ENCODE measurements at regions of chr10 and their contacts with region 1.

Region 1: DNA sequence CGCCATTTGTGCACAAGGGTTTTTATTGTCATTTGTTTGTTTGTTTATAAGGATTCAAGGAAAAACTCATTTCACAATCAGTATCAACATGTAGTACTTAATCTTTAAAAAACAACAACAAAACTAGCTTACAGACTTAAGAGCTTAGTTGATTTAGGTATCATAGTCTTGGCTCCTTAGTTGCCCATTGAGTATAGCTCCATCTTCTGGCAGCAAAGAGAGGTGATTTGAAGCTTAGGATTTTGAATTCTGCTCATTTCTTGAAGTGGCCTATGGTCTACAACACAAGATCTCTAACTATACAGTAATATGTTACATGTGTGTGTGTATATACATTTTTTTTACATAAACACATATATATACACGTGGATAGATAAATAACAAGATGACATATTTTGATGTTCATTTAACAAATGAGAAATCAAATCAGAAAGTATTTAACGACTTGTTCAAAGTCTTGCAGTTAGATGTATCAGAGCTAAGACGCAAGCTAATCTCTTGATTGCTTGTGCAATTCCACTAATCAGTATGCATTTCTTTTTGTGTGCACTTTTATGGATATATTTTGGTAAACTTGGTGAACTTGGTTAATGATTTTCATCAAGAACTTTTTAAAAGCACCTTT is 307.3 kb downstream of the CAMK1D start:
- DNase-seq: peak in 7 of 9 donors; percentile 25 to 73 (median 55)
- ATAC-seq: peak; percentile 86
- H3K4me3 ChIP-seq: no peak overlapping the region
- H3K4me3 Mint-ChIP-seq: peak overlapping the region in 1 of 10 donors; percentile 55
- H3K27ac ChIP-seq: no peak overlapping the region
- H3K27ac Mint-ChIP-seq: peak overlapping the region in 4 of 9 donors; percentile 29 to 68 (median 42)
- H3K4me1 ChIP-seq: no peaks in the 10 kb centered on the region
- H3K4me1 Mint-ChIP-seq: peaks cover 0 to 22% (median 4%) of the 10 kb centered on the region in 7 donors
- H3K27me3 ChIP-seq: no peaks in the 10 kb centered on the region
- H3K27me3 Mint-ChIP-seq: no peaks in the 10 kb centered on the region

Region 2: GRCh38 chr10:12214763-12215218 is 441.8 kb before region 1 on chr10:
- CTCF ChIA-PET with region 1: interaction called, 17 read pairs
- POLR2A ChIA-PET with region 1: no interaction called
- intact Hi-C with region 1: loop called (anchors 1 kb)
- DNase-seq: peak in 7 of 9 donors; percentile 27 to 62 (median 47)
- ATAC-seq: peak; percentile 69
- H3K4me3 ChIP-seq: no peak overlapping the region
- H3K4me3 Mint-ChIP-seq: peak overlapping the region; percentile 61 to 84 (median 72)
- H3K27ac ChIP-seq: peak overlapping the region; percentile 38
- H3K27ac Mint-ChIP-seq: peak overlapping the region; percentile 73 to 96 (median 87)
- H3K4me1 ChIP-seq: no peaks in the 10 kb centered on the region
- H3K4me1 Mint-ChIP-seq: peaks cover 5 to 37% (median 20%) of the 10 kb centered on the region in 7 donors
- H3K27me3 ChIP-seq: no peaks in the 10 kb centered on the region
- H3K27me3 Mint-ChIP-seq: no peaks in the 10 kb centered on the region

Region 3: GRCh38 chr10:12438919-12439692 is 217.5 kb before region 1 on chr10:
- CTCF ChIA-PET with region 1: no interaction called
- POLR2A ChIA-PET with region 1: no interaction called
- intact Hi-C with region 1: no loop called
- DNase-seq: no peak
- ATAC-seq: no peak
- H3K4me3 ChIP-seq: no peak overlapping the region
- H3K4me3 Mint-ChIP-seq: no peak overlapping the region
- H3K27ac ChIP-seq: no peak overlapping the region
- H3K27ac Mint-ChIP-seq: no peak overlapping the region
- H3K4me1 ChIP-seq: no peaks in the 10 kb centered on the region
- H3K4me1 Mint-ChIP-seq: peaks cover 0 to 27% (median 13%) of the 10 kb centered on the region in 7 donors
- H3K27me3 ChIP-seq: no peaks in the 10 kb centered on the region
- H3K27me3 Mint-ChIP-seq: peaks cover 0 to 11% (median 0%) of the 10 kb centered on the region in 5 donors

Region 4: GRCh38 chr10:12484941-12485805 is 171.5 kb before region 1 on chr10:
- CTCF ChIA-PET with region 1: interaction called, 6 read pairs
- POLR2A ChIA-PET with region 1: no interaction called
- intact Hi-C with region 1: loop called in 1 of 2 experiments (anchors 1 kb)
- DNase-seq: peak in 7 of 9 donors; percentile 13 to 38 (median 27)
- ATAC-seq: peak; percentile 70
- H3K4me3 ChIP-seq: no peak overlapping the region
- H3K4me3 Mint-ChIP-seq: peak overlapping the region; percentile 45 to 77 (median 71)
- H3K27ac ChIP-seq: no peak overlapping the region
- H3K27ac Mint-ChIP-seq: peak overlapping the region; percentile 61 to 90 (median 84)
- H3K4me1 ChIP-seq: peaks cover 0 to 24% of the 10 kb centered on the region in 2 donors
- H3K4me1 Mint-ChIP-seq: peaks cover 15 to 70% (median 47%) of the 10 kb centered on the region in 7 donors
- H3K27me3 ChIP-seq: no peaks in the 10 kb centered on the region
- H3K27me3 Mint-ChIP-seq: no peaks in the 10 kb centered on the region

Region 5: DNA sequence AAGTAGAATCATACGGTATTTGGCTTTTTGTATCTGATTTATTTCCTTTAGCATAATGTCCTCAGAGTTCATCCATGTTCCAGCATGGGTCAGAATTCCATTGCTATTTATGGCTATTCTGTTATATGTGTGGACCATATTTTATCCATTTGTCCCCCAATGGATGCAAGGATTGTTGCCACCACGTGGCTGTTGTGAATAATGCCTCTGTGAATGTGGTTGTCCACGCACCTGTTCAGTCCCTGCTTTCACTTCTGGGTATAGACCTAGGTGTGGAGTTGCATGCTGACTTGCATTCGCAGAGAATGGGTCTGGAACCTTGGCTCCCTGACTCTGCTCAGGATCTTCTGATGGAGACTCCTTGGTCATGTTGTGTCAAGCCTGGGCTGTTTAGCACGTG is 107.3 kb before region 1 on chr10:
- CTCF ChIA-PET with region 1: no interaction called
- POLR2A ChIA-PET with region 1: no interaction called
- intact Hi-C with region 1: loop called in 1 of 2 experiments (anchors 5 kb)
- DNase-seq: no peak
- ATAC-seq: no peak
- H3K4me3 ChIP-seq: no peak overlapping the region
- H3K4me3 Mint-ChIP-seq: peak overlapping the region in 2 of 10 donors; percentile 17 to 45
- H3K27ac ChIP-seq: no peak overlapping the region
- H3K27ac Mint-ChIP-seq: peak overlapping the region in 6 of 9 donors; percentile 21 to 54 (median 39)
- H3K4me1 ChIP-seq: peaks cover 0 to 13% of the 10 kb centered on the region in 2 donors
- H3K4me1 Mint-ChIP-seq: peaks cover 21 to 54% (median 46%) of the 10 kb centered on the region in 7 donors
- H3K27me3 ChIP-seq: no peaks in the 10 kb centered on the region
- H3K27me3 Mint-ChIP-seq: no peaks in the 10 kb centered on the region

Region 6: GRCh38 chr10:12605580-12606405 is 50.8 kb before region 1 on chr10:
- CTCF ChIA-PET with region 1: interaction called, 3 read pairs
- POLR2A ChIA-PET with region 1: no interaction called
- intact Hi-C with region 1: loop called in 1 of 2 experiments (anchors 1 kb)
- DNase-seq: peak; percentile 45 to 80 (median 73)
- ATAC-seq: peak; percentile 87
- H3K4me3 ChIP-seq: peak overlapping the region; percentile 67
- H3K4me3 Mint-ChIP-seq: peak overlapping the region; percentile 78 to 94 (median 89)
- H3K27ac ChIP-seq: peak overlapping the region; percentile 81
- H3K27ac Mint-ChIP-seq: peak overlapping the region; percentile 93 to 100 (median 98)
- H3K4me1 ChIP-seq: peaks cover 9 to 14% of the 10 kb centered on the region in 2 donors
- H3K4me1 Mint-ChIP-seq: peaks cover 10 to 62% (median 41%) of the 10 kb centered on the region in 7 donors
- H3K27me3 ChIP-seq: no peaks in the 10 kb centered on the region
- H3K27me3 Mint-ChIP-seq: no peaks in the 10 kb centered on the region

Region 7: DNA sequence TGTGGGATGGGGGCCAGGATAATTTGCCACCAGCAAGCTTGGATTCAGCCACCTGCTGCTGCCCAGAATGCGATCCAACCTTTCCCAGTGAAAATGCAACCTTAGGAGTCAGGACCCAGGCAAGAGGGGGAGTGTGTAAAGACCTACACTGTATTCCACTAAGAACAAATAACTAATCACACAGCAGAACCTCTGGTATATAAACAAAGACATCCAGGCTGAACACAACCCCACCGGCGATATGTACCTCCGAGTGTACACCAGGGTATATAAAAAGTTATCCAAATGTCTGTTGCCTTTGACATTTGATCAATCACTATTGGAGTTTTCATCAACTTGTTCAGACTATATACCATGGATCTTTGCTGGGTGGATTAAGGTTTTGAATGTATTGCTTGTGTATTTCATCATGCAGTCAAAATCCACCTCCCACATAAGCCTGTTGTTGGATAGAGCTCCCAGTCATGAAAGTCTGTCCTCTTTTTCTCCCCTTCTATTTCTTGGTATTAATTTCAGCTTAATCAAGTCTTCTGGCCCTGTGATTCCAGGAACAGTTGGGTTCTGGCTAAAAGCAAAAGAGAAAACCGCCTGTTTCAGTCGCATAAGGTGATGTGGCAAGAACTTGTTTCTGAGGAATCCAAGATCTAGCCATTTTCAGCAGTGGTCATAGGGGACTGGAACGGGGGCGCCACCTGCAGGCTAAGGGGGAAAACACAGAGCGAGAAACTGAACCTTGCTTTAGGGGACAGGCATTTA is 54.1 kb after region 1 on chr10:
- CTCF ChIA-PET with region 1: interaction called, 20 read pairs
- POLR2A ChIA-PET with region 1: no interaction called
- intact Hi-C with region 1: loop called (anchors 1 kb)
- DNase-seq: peak; percentile 50 to 83 (median 71)
- ATAC-seq: peak; percentile 89
- H3K4me3 ChIP-seq: no peak overlapping the region
- H3K4me3 Mint-ChIP-seq: peak overlapping the region in 1 of 10 donors; percentile 42
- H3K27ac ChIP-seq: no peak overlapping the region
- H3K27ac Mint-ChIP-seq: peak overlapping the region in 4 of 9 donors; percentile 4 to 79 (median 46)
- H3K4me1 ChIP-seq: no peaks in the 10 kb centered on the region
- H3K4me1 Mint-ChIP-seq: peaks cover 5 to 53% (median 8%) of the 10 kb centered on the region in 7 donors
- H3K27me3 ChIP-seq: no peaks in the 10 kb centered on the region
- H3K27me3 Mint-ChIP-seq: no peaks in the 10 kb centered on the region

Measured in naive thymus-derived CD4-positive, alpha-beta T cell (primary cell).